Heart right ventricle (tissue), 16 donors: ENCODE measurements at regions of chr1 and their contacts with region 1.

Region 1: GRCh38 chr1:12658531-12659453 is 14.9 kb downstream of the AADACL4 start:
- DNase-seq: peak; percentile 56 to 68
- ATAC-seq: peak; percentile 71 to 91 (median 86)
- H3K4me3 ChIP-seq: no peak overlapping the region
- H3K27ac ChIP-seq: no peak overlapping the region
- H3K4me1 ChIP-seq: peaks cover 0 to 7% (median 3%) of the 10 kb centered on the region in 9 donors
- H3K27me3 ChIP-seq: no peaks in the 10 kb centered on the region
- CTCF ChIP-seq: peak; percentile 94 to 98 (median 96)

Region 2: GRCh38 chr1:12275369-12275768 is 383.4 kb before region 1 on chr1:
- intact Hi-C with region 1: loop called in 2 of 10 experiments (anchors 5 to 10 kb)
- DNase-seq: peak; percentile 11 to 36
- ATAC-seq: no peak
- H3K4me3 ChIP-seq: no peak overlapping the region
- H3K27ac ChIP-seq: no peak overlapping the region
- H3K4me1 ChIP-seq: peaks cover 0 to 16% (median 0%) of the 10 kb centered on the region in 9 donors
- H3K27me3 ChIP-seq: no peaks in the 10 kb centered on the region
- CTCF ChIP-seq: peak; percentile 25 to 75 (median 61)

Region 3: DNA sequence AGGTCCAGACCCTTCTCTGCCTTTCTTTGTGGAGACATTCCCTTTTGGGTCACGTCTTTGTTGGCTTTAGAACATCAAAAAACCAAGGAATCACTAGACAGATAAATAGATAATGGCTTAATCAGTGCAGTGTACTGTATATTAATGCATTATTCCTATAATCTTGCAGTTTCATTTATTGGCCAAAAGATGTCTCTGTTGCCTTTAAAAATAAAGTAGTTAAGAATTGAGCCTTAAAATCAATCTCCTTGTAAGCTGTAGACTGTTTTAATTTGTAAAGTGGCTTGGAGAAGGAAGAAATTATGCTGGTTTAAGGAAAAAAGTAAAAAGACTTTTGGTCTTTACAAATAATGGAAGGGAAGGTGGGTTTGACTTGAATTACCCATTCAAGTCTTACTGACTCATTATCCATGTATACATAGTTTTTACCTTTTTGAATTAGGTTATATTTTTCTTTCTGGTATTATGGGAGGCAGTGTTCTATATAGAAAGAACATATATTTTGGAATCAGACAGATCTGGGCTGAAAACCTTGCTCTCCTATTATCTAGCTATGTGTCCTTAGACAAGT is 344.4 kb before region 1 on chr1:
- intact Hi-C with region 1: loop called (anchors 1 to 10 kb)
- DNase-seq: no peak
- ATAC-seq: peak in 5 of 8 donors; percentile 27 to 69 (median 63)
- H3K4me3 ChIP-seq: no peak overlapping the region
- H3K27ac ChIP-seq: peak overlapping the region in 4 of 10 donors; percentile 23 to 49 (median 32)
- H3K4me1 ChIP-seq: peaks cover 2 to 35% (median 11%) of the 10 kb centered on the region in 9 donors
- H3K27me3 ChIP-seq: no peaks in the 10 kb centered on the region
- CTCF ChIP-seq: peak; percentile 24 to 74 (median 57)

Region 4: DNA sequence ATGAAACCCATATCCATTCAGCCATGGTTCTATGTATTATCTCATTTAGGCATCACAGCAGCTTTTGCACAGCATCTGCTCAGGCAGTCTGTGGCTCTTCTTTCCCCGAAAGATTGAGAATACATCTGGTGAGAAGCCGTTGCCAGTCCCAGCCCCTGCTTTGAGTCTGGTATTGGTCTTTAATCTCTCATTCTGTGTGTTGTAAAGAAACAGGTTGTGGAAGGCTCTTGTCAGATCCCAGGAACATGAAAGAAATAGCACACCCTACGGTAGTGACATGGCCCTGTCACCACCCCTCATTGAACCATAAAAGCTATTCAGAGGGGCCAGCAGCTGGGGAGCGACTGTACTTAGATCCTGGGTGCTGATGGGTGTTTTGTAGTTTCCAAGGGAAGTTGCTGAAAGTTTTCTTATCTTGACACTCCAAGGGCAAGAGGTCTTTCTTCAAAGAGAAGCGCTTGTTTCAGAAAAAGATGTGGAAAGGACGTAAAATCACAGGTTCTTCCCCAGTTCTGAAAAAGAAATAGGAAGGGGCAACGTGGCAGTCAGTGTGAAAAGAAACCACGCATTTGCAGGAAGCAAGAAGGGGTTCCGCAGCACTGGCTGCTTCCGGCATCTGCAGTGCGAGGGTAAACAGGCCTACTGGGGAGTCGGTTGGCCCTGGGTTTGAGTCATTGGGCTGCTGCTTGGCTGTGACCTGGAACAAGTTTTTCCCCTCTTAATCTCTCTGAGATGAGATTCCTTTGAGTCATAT is 185.8 kb before region 1 on chr1:
- intact Hi-C with region 1: no loop called
- DNase-seq: peak in 1 of 2 donors; percentile 29
- ATAC-seq: peak in 3 of 8 donors; percentile 9 to 34 (median 25)
- H3K4me3 ChIP-seq: no peak overlapping the region
- H3K27ac ChIP-seq: peak overlapping the region; percentile 6 to 91 (median 74)
- H3K4me1 ChIP-seq: peaks cover 22 to 90% (median 79%) of the 10 kb centered on the region in 9 donors
- H3K27me3 ChIP-seq: no peaks in the 10 kb centered on the region
- CTCF ChIP-seq: no peak

Region 5: GRCh38 chr1:12585536-12585935 is 73.3 kb before region 1 on chr1:
- intact Hi-C with region 1: loop called in 1 of 10 experiments (anchors 2 kb)
- DNase-seq: no peak
- ATAC-seq: peak in 3 of 8 donors; percentile 3 to 13 (median 3)
- H3K4me3 ChIP-seq: no peak overlapping the region
- H3K27ac ChIP-seq: peak overlapping the region in 1 of 10 donors; percentile 25
- H3K4me1 ChIP-seq: peaks cover 8 to 59% (median 21%) of the 10 kb centered on the region in 9 donors
- H3K27me3 ChIP-seq: no peaks in the 10 kb centered on the region
- CTCF ChIP-seq: no peak

Region 6: GRCh38 chr1:12614402-12615158 is 44.2 kb before region 1 on chr1:
- intact Hi-C with region 1: no loop called
- DNase-seq: no peak
- ATAC-seq: no peak
- H3K4me3 ChIP-seq: peak overlapping the region; percentile 55 to 91 (median 78)
- H3K27ac ChIP-seq: peak overlapping the region; percentile 92 to 98 (median 96)
- H3K4me1 ChIP-seq: peaks cover 4 to 72% (median 42%) of the 10 kb centered on the region in 9 donors
- H3K27me3 ChIP-seq: peaks cover 0 to 9% (median 0%) of the 10 kb centered on the region in 7 donors
- CTCF ChIP-seq: no peak